ENCODE measurements at regions of chr14 and their contacts with region 1.

Region 1: DNA sequence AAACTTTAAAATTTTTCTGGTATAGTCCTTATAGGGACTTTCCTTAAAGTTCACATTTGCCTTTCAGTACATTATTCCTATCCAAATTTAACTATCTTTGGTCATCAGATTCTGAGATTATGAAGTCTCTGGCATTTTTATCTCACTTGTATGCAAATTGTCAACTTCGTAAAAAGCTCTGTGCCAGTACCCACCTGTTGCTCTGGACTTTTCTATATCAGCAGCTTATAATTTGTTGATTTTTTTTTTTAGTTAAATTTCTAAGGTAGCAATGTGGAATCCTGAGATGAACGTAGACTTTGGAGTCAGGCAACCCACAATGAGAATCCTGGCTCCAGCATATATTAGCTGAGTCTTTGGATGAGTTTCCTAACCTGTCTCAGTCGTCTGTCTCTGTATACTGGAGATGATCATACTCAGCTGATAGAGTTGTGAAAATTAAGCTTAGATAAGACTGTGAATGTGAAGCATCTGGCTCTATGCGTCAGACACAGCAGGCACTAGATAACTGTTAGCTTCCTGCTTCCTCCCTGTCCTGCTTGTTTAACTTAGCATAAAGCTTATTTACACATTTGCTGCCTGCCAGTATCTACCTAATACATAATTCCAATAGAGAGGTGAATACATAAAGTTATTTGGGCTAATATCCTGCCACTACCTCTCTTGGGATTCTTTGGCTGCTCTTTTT is 59.8 kb downstream of the MARK3 start:
- DNase-seq: no peak
- ATAC-seq: peak; percentile 47 to 76 (median 62)
- H3K4me3 ChIP-seq: no peak overlapping the region
- H3K27ac ChIP-seq: peak overlapping the region; percentile 59
- H3K4me1 ChIP-seq: peaks cover 49% of the 10 kb centered on the region
- H3K27me3 ChIP-seq: no peaks in the 10 kb centered on the region
- CTCF ChIP-seq: no peak

Region 2: GRCh38 chr14:103391048-103391447 is 53.9 kb before region 1 on chr14:
- intact Hi-C with region 1: loop called in 1 of 2 experiments (anchors 5 kb)
- DNase-seq: no peak
- ATAC-seq: peak in 1 of 4 donors; percentile 15
- H3K4me3 ChIP-seq: no peak overlapping the region
- H3K27ac ChIP-seq: no peak overlapping the region
- H3K4me1 ChIP-seq: peaks cover 65% of the 10 kb centered on the region
- H3K27me3 ChIP-seq: no peaks in the 10 kb centered on the region
- CTCF ChIP-seq: peak; percentile 55

Region 3: DNA sequence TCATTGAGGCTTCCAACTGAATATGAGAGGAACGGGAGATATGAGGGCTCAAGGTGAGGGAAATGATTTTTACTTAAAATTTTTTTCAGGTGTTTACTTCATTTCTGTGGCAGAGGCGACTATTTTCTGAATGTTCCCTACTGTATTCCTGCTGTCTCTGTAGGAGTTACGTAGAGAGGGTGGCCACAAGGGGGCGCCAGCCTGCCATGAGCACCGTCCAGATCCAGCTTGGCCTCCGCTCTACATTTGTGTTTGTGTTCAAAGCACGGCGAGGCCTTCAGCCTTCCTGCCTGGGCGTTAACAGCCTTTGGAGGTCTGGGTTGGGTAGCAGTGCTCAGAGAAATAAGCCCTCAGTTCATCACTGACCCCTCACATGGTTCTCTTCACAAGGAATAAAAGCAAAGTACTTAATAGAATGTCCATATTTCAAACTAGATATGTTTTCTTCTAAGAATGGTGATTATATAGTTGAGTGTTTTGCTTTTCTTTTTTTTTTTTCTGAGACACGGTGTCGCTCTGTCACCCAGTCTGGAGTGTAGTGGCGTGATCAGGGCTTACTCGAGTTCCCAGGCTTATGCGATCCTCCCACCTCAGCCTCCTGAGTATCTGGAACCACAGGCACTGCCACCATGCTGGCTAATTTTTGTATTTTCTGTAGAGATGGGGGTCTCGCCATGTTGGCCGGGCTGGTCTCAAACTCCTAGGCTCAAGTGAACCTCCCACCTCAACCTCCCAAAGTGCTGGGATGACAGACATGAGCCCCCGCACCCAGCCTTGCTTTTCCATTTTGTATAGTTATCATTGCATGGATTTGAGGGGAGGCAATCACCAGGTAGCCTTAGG is 55.4 kb after region 1 on chr14:
- intact Hi-C with region 1: no loop called
- DNase-seq: peak; percentile 88 to 93
- ATAC-seq: peak; percentile 84 to 89 (median 89)
- H3K4me3 ChIP-seq: no peak overlapping the region
- H3K27ac ChIP-seq: no peak overlapping the region
- H3K4me1 ChIP-seq: peaks cover 14% of the 10 kb centered on the region
- H3K27me3 ChIP-seq: no peaks in the 10 kb centered on the region
- CTCF ChIP-seq: peak; percentile 91

Measured in psoas muscle (tissue), 8 donors.